HAP-1 (cell line): ENCODE measurements at regions of chr1 and their contacts with region 1.

Region 1: GRCh38 chr1:91553200-91553621 is 52.6 kb downstream of the CDC7 start:
- DNase-seq: no peak
- H3K4me3 ChIP-seq: no peak overlapping the region
- H3K4me1 ChIP-seq: no peaks in the 10 kb centered on the region
- H3K27me3 ChIP-seq: no peaks in the 10 kb centered on the region

Region 2: DNA sequence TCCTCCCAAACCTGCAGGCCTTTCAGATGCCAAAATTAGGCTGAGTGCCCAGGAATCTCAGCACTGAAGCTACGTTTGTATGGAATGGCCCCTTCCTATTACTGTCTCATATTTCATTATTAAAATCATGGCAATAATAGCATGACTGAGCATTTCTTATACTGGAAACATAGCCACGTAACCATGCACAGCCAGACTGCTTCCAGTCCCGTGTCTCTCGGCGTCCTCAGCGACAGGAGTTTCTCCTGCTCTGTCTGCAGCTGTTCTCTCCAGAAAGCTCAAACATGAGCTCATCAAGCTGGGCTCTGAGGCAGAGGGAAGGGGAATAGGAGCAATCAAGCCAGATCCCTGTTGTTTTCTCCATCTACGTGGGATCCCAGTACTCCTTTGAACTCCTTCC is 51.4 kb after region 1 on chr1:
- in situ Hi-C with region 1: loop called (anchors 5 kb)
- DNase-seq: no peak
- H3K4me3 ChIP-seq: no peak overlapping the region
- H3K4me1 ChIP-seq: no peaks in the 10 kb centered on the region
- H3K27me3 ChIP-seq: no peaks in the 10 kb centered on the region